WTC11 (cell line): ENCODE measurements at regions of chr6 and their contacts with region 1.

Region 1: GRCh38 chr6:32952817-32953739 is at the start of gene HLA-DMA:
- DNase-seq: peak; percentile 84
- ATAC-seq: peak; percentile 97
- H3K4me3 Mint-ChIP-seq: peak within 1 kb of the TSS; percentile 47
- H3K27ac Mint-ChIP-seq: peak within 1 kb of the TSS; percentile 87
- H3K4me1 Mint-ChIP-seq: peaks cover 20% of the 10 kb centered on the region
- H3K27me3 Mint-ChIP-seq: no peaks in the 10 kb centered on the region
- CTCF ChIP-seq: peak; percentile 51; the same call in 1 of the 2 replicates
- total RNA-seq, gene HLA-DMA: 6.0 to 9.3 TPM (median 6.6 TPM) in 3 replicates

Region 2: GRCh38 chr6:32838114-32838958 is 114.7 kb before region 1 on chr6 and contains the start of gene TAP2:
- CTCF ChIA-PET with region 1: interaction called, 61 read pairs
- POLR2A ChIA-PET with region 1: interaction called, 5 read pairs
- DNase-seq: peak; percentile 97
- ATAC-seq: peak; percentile 88
- H3K4me3 Mint-ChIP-seq: peak within 1 kb of the TSS; percentile 72
- H3K27ac Mint-ChIP-seq: no peak within 1 kb of the TSS
- H3K4me1 Mint-ChIP-seq: peaks cover 17% of the 10 kb centered on the region
- H3K27me3 Mint-ChIP-seq: peaks cover 55% of the 10 kb centered on the region
- CTCF ChIP-seq: peak; percentile 85
- total RNA-seq, gene TAP2: 14.7 to 23.0 TPM (median 16.5 TPM) in 3 replicates

Region 3: DNA sequence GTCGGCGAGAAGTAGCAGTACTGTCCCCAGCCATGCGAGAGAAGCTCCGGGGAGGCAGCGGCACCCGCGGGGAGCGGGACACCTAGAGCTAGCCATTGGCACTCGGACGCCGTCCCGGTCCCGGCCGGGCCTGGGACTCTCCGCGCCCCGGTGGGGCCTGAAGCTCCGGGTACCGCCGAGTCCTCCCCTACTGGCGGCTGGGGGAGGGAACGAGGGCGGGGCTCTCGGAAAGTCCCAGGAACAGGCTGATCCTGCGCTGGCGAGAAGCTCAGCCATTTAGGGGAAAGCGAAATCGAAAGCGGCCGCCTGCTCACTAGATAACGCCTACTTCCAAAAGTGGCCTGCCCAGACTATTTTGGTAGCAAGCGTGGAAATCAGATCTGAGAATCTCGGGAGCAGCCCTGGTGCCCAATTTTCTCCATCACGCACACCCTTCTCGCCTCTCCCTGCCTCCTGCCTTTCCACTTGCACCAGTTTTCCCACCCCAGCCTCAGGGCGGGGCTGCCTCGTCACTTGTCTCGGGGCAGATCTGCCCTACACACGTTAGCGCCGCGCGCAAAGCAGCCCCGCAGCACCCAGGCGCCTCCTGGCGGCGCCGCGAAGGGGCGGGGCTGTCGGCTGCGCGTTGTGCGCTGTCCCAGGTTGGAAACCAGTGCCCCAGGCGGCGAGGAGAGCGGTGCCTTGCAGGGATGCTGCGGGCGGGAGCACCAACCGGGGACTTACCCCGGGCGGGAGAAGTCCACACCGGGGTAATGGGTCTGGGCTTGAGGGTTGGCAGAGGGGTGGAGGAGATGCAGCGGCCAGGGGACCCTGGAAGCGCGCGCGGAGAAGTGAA is 99.3 kb before region 1 on chr6 and contains the starts of genes PSMB9 and TAP1:
- CTCF ChIA-PET with region 1: interaction called, 10 read pairs
- POLR2A ChIA-PET with region 1: no interaction called
- DNase-seq: peak; percentile 94
- ATAC-seq: peak; percentile 91
- H3K4me3 Mint-ChIP-seq: peak within 1 kb of the TSS; percentile 88
- H3K27ac Mint-ChIP-seq: peak within 1 kb of the TSS; percentile 90
- H3K4me1 Mint-ChIP-seq: peaks cover 14% of the 10 kb centered on the region
- H3K27me3 Mint-ChIP-seq: peaks cover 91% of the 10 kb centered on the region
- CTCF ChIP-seq: 0 out of 2 replicates have a peak, but pooled peaks have one; percentile 31
- total RNA-seq, gene PSMB9: 1.8 to 4.3 TPM (median 4.0 TPM) in 3 replicates
- total RNA-seq, gene TAP1: 13.6 to 15.9 TPM (median 15.7 TPM) in 3 replicates

Region 4: GRCh38 chr6:32885698-32886286 is 67.3 kb before region 1 on chr6:
- CTCF ChIA-PET with region 1: interaction called, 33 read pairs
- POLR2A ChIA-PET with region 1: no interaction called
- DNase-seq: no peak
- ATAC-seq: no peak
- H3K4me3 Mint-ChIP-seq: no peak overlapping the region
- H3K27ac Mint-ChIP-seq: no peak overlapping the region
- H3K4me1 Mint-ChIP-seq: no peaks in the 10 kb centered on the region
- H3K27me3 Mint-ChIP-seq: peaks cover 9% of the 10 kb centered on the region
- CTCF ChIP-seq: peak; percentile 14; the same call in 1 of the 2 replicates

Region 5: DNA sequence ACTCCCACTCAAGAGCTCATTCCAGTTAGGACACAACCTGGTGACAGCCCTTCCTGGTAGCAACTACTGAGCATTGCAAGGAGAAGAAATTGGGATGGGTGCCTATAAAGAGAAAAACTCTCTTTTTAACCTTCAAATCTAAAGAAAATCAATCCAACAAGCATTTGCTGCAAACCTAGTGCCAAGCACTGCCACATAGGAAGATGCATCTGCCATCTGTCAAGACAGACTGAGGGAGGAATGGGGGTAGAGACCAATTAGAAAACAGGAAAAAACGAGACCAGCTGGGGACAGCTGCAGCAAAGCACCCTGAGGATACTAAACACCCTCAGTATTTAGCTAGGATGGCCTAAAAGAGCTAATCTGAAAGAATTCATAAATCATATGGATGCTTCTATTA is 40.1 kb before region 1 on chr6:
- CTCF ChIA-PET with region 1: interaction called, 35 read pairs
- POLR2A ChIA-PET with region 1: no interaction called
- DNase-seq: no peak
- ATAC-seq: no peak
- H3K4me3 Mint-ChIP-seq: no peak overlapping the region
- H3K27ac Mint-ChIP-seq: no peak overlapping the region
- H3K4me1 Mint-ChIP-seq: no peaks in the 10 kb centered on the region
- H3K27me3 Mint-ChIP-seq: peaks cover 18% of the 10 kb centered on the region
- CTCF ChIP-seq: no peak

Region 6: DNA sequence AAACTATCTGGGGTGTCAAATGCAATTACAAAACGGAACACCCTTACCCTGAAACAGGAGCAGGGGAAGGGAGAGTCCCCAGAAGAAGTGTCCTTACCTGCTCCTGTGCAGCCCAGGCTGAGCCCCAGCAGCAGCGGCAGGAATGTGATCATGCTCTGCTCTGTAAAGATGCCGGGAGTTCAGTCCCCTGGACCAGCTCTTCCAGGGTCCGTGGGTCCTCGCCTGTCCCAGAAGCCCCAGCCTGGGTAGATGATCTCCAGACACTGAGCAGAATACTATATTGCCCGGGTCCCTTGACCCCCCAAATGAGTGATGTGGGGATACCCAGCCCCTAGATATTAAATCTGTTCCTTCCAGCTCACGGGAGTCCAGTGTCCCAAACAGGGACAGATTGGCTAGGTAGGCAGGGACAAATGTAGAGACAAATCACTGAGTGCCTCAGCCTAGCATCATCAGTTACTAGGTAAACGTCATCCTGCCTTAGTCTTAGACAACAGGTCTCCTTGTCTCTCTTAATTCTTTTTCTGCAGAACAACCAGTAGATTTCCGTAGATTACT is 12.3 kb before region 1 on chr6 and contains the start of gene HLA-DMB:
- CTCF ChIA-PET with region 1: interaction called, 162 read pairs
- POLR2A ChIA-PET with region 1: no interaction called
- DNase-seq: peak; percentile 23
- ATAC-seq: peak; percentile 97
- H3K4me3 Mint-ChIP-seq: peak within 1 kb of the TSS; percentile 60
- H3K27ac Mint-ChIP-seq: peak within 1 kb of the TSS; percentile 67
- H3K4me1 Mint-ChIP-seq: peaks cover 13% of the 10 kb centered on the region
- H3K27me3 Mint-ChIP-seq: peaks cover 17% of the 10 kb centered on the region
- CTCF ChIP-seq: no peak
- total RNA-seq, gene HLA-DMB: 1.1 to 2.7 TPM (median 2.3 TPM) in 3 replicates

Region 7: GRCh38 chr6:33367009-33367714 is 414.1 kb after region 1 on chr6:
- CTCF ChIA-PET with region 1: no interaction called
- POLR2A ChIA-PET with region 1: no interaction called
- DNase-seq: no peak
- ATAC-seq: no peak
- H3K4me3 Mint-ChIP-seq: no peak overlapping the region
- H3K27ac Mint-ChIP-seq: peak overlapping the region; percentile 48
- H3K4me1 Mint-ChIP-seq: peaks cover 14% of the 10 kb centered on the region
- H3K27me3 Mint-ChIP-seq: no peaks in the 10 kb centered on the region
- CTCF ChIP-seq: no peak